ENCODE measurements at regions of chr6 and their contacts with region 1.

Region 1: GRCh38 chr6:70667711-70668498 is at the start of gene SMAP1:
- DNase-seq: peak; percentile 94
- ATAC-seq: peak; percentile 94
- H3K4me3 Mint-ChIP-seq: peak within 1 kb of the TSS; percentile 93
- H3K27ac Mint-ChIP-seq: peak within 1 kb of the TSS; percentile 92
- H3K4me1 Mint-ChIP-seq: peaks cover 53% of the 10 kb centered on the region
- H3K27me3 Mint-ChIP-seq: no peaks in the 10 kb centered on the region
- CTCF ChIP-seq: no peak
- total RNA-seq, gene SMAP1: 24.1 to 26.3 TPM

Region 2: GRCh38 chr6:70566751-70567382 is 101.0 kb before region 1 on chr6 and contains the start of gene SDHAF4:
- CTCF ChIA-PET with region 1: no interaction called
- POLR2A ChIA-PET with region 1: interaction called, 7 read pairs
- intact Hi-C with region 1: loop called (anchors 5 kb)
- DNase-seq: peak; percentile 95
- ATAC-seq: peak; percentile 100
- H3K4me3 Mint-ChIP-seq: peak within 1 kb of the TSS; percentile 91
- H3K27ac Mint-ChIP-seq: peak within 1 kb of the TSS; percentile 88
- H3K4me1 Mint-ChIP-seq: peaks cover 17% of the 10 kb centered on the region
- H3K27me3 Mint-ChIP-seq: no peaks in the 10 kb centered on the region
- CTCF ChIP-seq: no peak
- total RNA-seq, gene SDHAF4: 17.9 to 18.9 TPM